ENCODE measurements at regions of chr3 and their contacts with region 1.

Region 1: GRCh38 chr3:84008623-84009022 is 950.2 kb upstream of the CADM2 start:
- DNase-seq: no peak
- H3K4me3 ChIP-seq: no peak overlapping the region
- H3K27ac ChIP-seq: no peak overlapping the region
- H3K4me1 ChIP-seq: no peaks in the 10 kb centered on the region
- H3K27me3 ChIP-seq: no peaks in the 10 kb centered on the region
- CTCF ChIP-seq: no peak

Region 2: GRCh38 chr3:84077479-84077878 is 68.9 kb after region 1 on chr3:
- intact Hi-C with region 1: loop called (anchors 10 kb)
- DNase-seq: no peak
- H3K4me3 ChIP-seq: no peak overlapping the region
- H3K27ac ChIP-seq: no peak overlapping the region
- H3K4me1 ChIP-seq: no peaks in the 10 kb centered on the region
- H3K27me3 ChIP-seq: no peaks in the 10 kb centered on the region
- CTCF ChIP-seq: no peak